Activated CD4-positive, alpha-beta memory T cell treated with anti-CD3 and anti-CD28 coated beads, Interleukin-2, amount 10 ng/mL, durations not matched to agents 7 days and 5 days (primary cell): ENCODE measurements at regions of chr3 and their contacts with region 1.

Region 1: DNA sequence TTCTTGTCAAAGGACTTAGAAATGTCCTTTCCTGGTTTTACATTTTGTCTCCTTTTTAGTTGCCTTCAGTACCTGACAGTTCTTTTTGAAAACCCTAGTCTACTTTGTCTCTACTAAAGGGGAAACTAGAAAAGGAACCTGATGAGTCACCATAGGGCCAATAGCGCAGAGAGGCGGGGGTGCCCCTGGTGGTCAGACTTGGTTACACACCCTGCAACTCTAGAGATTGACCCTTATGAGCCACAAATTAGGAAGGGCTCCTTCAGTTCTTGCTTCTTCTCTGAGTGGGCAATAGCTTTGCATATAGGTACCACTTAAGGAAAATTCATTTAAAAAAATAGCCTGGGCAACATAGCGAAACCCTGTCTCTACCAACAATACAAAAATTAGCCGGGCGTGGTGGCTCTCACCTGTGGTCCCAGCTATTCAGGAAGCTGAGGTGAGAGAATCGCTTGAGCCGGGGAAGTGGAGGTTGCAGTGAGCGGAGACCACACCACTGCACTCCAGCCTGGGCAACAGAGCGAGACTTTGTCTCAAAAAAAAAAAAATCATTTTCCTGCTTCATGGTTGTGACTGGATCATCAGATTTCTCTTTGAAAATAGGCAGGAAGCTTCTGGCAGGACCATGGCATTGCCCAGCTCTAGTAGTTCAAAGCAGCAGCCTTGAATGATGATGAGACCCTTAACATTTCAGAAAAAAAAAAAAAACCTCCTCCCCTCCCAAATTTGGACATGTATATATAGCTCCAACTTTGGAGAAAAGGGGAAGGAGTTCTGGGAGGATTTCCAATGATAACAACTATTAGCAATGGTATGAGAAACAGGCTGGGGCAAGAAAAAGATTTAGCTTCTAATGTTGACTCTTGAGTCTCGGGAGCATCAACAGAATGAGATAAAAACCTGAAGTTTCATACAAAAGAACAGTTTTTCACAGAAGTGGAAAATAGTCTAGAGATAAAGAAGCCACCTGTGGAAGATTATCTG is 45.2 kb upstream of the RASA2 start:
- DNase-seq: peak; percentile 84
- H3K4me3 Mint-ChIP-seq: no peak overlapping the region
- H3K27ac Mint-ChIP-seq: peak overlapping the region; percentile 81
- H3K4me1 Mint-ChIP-seq: peaks cover 31% of the 10 kb centered on the region
- H3K27me3 Mint-ChIP-seq: no peaks in the 10 kb centered on the region

Region 2: DNA sequence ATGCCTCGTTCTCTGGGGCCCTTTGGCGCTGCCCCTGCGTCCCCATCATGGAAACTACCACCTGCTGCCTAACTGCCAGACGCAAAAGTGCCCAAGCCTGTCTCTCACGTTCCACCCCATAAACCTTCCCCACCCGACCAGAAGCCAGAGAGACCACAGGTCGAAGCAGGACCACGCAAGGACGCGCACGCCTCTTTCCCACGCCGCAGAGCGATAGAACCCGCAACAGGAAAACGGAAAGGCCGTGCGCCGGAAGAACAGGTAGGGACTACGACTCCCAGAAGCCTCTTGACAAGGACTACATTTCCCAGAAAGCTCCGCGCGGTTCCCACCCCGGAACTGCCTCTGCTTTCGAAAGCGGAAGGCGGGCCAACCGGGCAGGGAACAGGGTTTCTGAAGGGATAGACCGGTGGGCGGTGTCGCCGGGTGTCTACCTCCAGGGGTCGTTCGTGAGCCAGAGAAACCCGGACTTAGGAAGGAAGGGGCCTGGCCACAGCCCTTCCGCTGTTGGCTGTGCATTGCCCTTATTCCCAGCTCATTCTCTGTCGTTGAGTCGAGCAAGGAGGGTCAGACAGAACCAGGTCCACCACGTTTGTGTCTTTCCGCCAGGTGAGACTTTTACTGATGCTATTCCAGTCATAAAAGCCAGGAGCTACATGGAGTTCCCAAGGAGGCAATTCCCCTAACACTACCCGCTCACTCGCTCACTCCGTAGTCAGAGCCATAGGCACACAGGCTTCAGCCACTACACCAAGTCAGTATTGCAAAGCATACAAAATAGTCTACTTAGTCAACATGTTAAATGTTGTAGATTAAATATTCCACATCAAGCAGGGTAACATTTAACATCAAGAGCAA is 129.9 kb before region 1 on chr3:
- CTCF ChIA-PET with region 1: interaction called, 47 read pairs
- POLR2A ChIA-PET with region 1: interaction called, 6 read pairs
- DNase-seq: peak; percentile 99
- H3K4me3 Mint-ChIP-seq: peak overlapping the region; percentile 93
- H3K27ac Mint-ChIP-seq: peak overlapping the region; percentile 86
- H3K4me1 Mint-ChIP-seq: peaks cover 58% of the 10 kb centered on the region
- H3K27me3 Mint-ChIP-seq: no peaks in the 10 kb centered on the region

Region 3: DNA sequence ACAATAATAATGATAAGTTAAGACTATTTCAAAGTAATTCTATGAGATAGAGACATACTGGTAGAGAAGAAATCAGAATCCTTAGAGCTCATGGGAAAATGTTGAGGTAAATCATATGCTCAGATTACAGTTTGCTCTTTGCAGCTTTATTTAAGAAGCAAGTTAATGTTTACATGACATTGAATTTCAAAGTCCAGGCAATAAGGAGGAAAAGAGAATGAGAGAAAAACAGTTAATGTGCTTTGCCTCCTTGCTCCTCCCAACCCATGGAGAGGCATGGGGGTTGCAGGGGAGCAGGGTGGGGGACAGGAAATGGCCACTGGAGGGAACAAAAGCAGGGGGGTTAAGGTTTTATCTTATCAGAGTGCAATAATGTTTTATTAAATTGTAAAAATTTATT is 115.5 kb before region 1 on chr3:
- CTCF ChIA-PET with region 1: no interaction called
- POLR2A ChIA-PET with region 1: no interaction called
- DNase-seq: no peak
- H3K4me3 Mint-ChIP-seq: no peak overlapping the region
- H3K27ac Mint-ChIP-seq: no peak overlapping the region
- H3K4me1 Mint-ChIP-seq: peaks cover 9% of the 10 kb centered on the region
- H3K27me3 Mint-ChIP-seq: no peaks in the 10 kb centered on the region

Region 4: GRCh38 chr3:141370065-141370533 is 71.6 kb before region 1 on chr3:
- CTCF ChIA-PET with region 1: interaction called, 16 read pairs
- POLR2A ChIA-PET with region 1: interaction called, 5 read pairs
- DNase-seq: peak; percentile 65
- H3K4me3 Mint-ChIP-seq: no peak overlapping the region
- H3K27ac Mint-ChIP-seq: no peak overlapping the region
- H3K4me1 Mint-ChIP-seq: peaks cover 38% of the 10 kb centered on the region
- H3K27me3 Mint-ChIP-seq: no peaks in the 10 kb centered on the region

Region 5: DNA sequence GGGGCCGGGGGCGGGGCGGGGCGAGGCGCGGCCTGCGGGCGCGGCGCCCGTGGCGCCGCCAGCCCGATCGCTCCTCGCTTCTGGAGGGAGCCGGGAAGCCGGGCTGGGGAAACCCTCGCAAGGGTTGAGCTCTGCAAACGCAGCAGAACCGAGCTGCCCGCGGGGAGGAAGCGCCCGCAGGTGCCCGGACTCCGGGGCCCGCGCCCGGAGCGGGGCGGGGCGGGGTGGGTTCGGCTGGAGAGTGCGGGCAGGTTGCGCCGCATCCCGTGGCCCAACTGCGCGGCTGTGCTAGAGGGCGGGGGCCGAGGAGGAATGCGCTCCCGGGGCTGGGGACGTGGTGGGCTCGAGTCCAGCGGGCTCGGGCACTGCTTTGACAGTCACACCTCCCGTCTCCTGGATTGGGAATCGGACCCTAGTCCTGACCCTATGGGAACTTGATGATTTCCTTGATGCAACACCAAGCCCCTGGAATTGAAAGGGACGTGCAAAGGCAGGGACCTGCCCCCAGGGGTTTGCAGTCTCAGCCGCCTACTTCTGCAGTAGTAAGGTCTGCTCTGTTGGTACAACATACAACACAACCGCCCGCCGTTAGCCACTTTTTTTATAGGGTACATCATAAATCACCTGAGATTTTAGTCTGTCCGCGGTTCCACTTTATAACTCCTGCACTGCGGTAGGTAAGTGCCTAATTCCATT is 39.0 kb before region 1 on chr3:
- CTCF ChIA-PET with region 1: interaction called, 10 read pairs
- POLR2A ChIA-PET with region 1: interaction called, 7 read pairs
- DNase-seq: peak; percentile 56
- H3K4me3 Mint-ChIP-seq: peak overlapping the region; percentile 84
- H3K27ac Mint-ChIP-seq: peak overlapping the region; percentile 81
- H3K4me1 Mint-ChIP-seq: peaks cover 63% of the 10 kb centered on the region
- H3K27me3 Mint-ChIP-seq: no peaks in the 10 kb centered on the region

Region 6: GRCh38 chr3:141425523-141426233 is 16.0 kb before region 1 on chr3:
- CTCF ChIA-PET with region 1: interaction called, 19 read pairs
- POLR2A ChIA-PET with region 1: interaction called, 6 read pairs
- DNase-seq: no peak
- H3K4me3 Mint-ChIP-seq: no peak overlapping the region
- H3K27ac Mint-ChIP-seq: no peak overlapping the region
- H3K4me1 Mint-ChIP-seq: peaks cover 20% of the 10 kb centered on the region
- H3K27me3 Mint-ChIP-seq: no peaks in the 10 kb centered on the region